AG04450 (cell line): ENCODE measurements at regions of chr10 and their contacts with region 1.

Region 1: GRCh38 chr10:59830601-59831259 is 75.6 kb downstream of the CCDC6 start:
- DNase-seq: peak; percentile 20
- H3K4me3 ChIP-seq: no peak overlapping the region
- H3K27ac ChIP-seq: no peak overlapping the region
- H3K27me3 ChIP-seq: no peaks in the 10 kb centered on the region
- CTCF ChIP-seq: peak; percentile 91

Region 2: DNA sequence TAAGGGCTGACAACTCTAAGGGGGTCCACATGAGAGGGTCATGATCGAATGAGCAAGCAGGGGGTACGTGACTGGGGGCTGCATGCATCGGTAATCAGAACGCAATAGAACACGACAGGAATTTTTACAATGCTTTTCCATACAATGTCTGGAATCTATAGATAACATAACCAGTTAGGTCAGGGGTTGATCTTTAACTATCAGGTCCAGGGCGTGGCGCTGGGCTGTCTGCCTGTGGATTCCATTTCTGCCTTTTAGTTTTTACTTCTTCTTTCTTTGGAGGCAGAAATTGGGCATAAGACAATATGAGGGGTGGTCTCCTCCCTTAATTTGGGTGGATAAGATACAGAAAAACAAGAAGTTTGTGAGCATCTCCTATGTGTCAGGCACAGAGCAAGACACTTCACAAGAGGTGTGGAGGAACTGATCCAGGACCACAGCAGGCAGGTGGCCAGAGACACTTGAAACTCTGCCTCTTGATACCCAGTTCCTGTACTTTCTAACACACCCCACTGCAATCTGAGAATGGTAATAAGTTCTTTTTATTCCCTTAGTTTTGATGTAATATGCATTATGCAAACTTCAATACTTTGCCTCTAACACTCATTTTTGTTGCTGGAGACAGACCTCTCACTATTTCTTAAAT is 59.4 kb before region 1 on chr10:
- CTCF ChIA-PET with region 1: no interaction called
- POLR2A ChIA-PET with region 1: no interaction called
- DNase-seq: no peak
- H3K4me3 ChIP-seq: no peak overlapping the region
- H3K27ac ChIP-seq: no peak overlapping the region
- H3K27me3 ChIP-seq: no peaks in the 10 kb centered on the region
- CTCF ChIP-seq: no peak

Region 3: GRCh38 chr10:59808896-59809643 is 21.7 kb before region 1 on chr10:
- CTCF ChIA-PET with region 1: interaction called, 15 read pairs
- POLR2A ChIA-PET with region 1: no interaction called
- DNase-seq: no peak
- H3K4me3 ChIP-seq: no peak overlapping the region
- H3K27ac ChIP-seq: no peak overlapping the region
- H3K27me3 ChIP-seq: no peaks in the 10 kb centered on the region
- CTCF ChIP-seq: peak; percentile 54

Region 4: DNA sequence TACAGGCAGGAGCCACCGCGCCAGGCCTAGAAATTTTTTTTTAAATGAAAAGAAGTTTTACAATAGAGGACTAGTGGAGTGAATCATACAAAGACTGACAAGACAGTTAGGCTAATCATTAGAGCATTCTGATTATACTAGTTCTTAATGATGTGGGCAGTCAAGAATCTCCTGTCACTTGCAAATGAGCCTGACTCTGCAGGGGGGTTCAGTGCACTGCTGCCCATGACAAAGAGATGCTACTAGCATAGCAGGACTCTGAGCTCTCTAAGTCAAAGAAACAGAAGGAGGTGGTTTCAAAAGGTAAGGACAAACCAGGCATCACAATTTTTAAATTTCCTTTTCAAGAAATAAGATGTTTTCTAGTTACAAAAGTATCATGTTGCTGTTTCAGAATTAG is 16.6 kb after region 1 on chr10:
- CTCF ChIA-PET with region 1: interaction called, 29 read pairs
- POLR2A ChIA-PET with region 1: no interaction called
- DNase-seq: no peak
- H3K4me3 ChIP-seq: no peak overlapping the region
- H3K27ac ChIP-seq: no peak overlapping the region
- H3K27me3 ChIP-seq: no peaks in the 10 kb centered on the region
- CTCF ChIP-seq: no peak

Region 5: GRCh38 chr10:59865101-59865500 is 34.4 kb after region 1 on chr10:
- CTCF ChIA-PET with region 1: interaction called, 29 read pairs
- POLR2A ChIA-PET with region 1: no interaction called
- DNase-seq: no peak
- H3K4me3 ChIP-seq: no peak overlapping the region
- H3K27ac ChIP-seq: no peak overlapping the region
- H3K27me3 ChIP-seq: no peaks in the 10 kb centered on the region
- CTCF ChIP-seq: peak; percentile 24; the same call in 1 of the 2 replicates

Region 6: GRCh38 chr10:59906417-59907202 is 75.9 kb after region 1 on chr10 and contains the start of gene CCDC6:
- CTCF ChIA-PET with region 1: interaction called, 58 read pairs
- POLR2A ChIA-PET with region 1: interaction called, 10 read pairs
- DNase-seq: peak; percentile 81
- H3K4me3 ChIP-seq: peak within 1 kb of the TSS; percentile 92
- H3K27ac ChIP-seq: peak within 1 kb of the TSS; percentile 88
- H3K27me3 ChIP-seq: no peaks in the 10 kb centered on the region
- CTCF ChIP-seq: peak; percentile 72
- polyA plus RNA-seq, gene CCDC6: 42.2 and 51.1 TPM in 2 replicates

Region 7: DNA sequence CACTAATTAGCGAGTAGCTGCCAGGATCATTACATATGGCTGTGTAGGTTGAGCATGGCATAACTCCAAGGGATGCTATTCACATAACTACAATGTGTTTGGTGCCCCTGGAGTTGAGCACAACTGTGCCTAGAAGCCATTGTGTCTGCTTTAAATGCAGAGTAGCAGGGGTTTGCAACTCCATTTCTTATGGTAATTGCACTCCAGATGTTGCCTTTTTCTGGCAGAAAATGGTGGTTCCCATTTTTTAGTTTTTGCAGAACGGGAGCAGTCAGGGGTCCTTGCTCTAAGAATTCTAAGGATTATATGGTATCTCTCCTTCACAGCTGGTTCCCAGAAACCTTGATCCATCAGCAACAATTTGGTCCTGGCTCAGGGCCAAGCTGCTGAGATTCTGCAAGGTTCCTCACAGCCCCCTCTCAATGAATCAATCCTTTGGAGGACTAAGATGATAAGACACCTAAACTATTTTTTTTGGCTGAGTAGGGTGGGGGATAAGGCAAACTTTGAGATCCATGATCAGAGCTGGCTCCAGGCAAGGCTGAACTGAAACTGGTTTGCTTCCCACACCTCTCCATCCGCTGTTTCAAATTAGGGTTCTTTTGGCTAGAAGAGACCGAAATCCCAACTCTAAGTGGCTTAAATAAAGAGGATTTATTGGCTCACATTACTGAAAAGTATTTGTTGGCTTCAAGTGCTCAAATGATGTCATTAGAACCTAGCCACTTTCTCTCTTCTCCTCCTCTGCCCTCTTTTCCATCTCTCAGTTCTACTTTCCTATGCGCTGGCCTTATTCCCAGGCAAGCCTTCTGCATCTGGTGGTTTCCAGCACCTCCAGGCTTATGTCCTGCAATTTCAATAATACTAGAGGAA is 173.2 kb after region 1 on chr10:
- CTCF ChIA-PET with region 1: no interaction called
- POLR2A ChIA-PET with region 1: no interaction called
- DNase-seq: no peak
- H3K4me3 ChIP-seq: no peak overlapping the region
- H3K27ac ChIP-seq: no peak overlapping the region
- H3K27me3 ChIP-seq: no peaks in the 10 kb centered on the region
- CTCF ChIP-seq: no peak